Heart right ventricle (tissue), 16 donors: ENCODE measurements at regions of chr1 and their contacts with region 1.

Region 1: DNA sequence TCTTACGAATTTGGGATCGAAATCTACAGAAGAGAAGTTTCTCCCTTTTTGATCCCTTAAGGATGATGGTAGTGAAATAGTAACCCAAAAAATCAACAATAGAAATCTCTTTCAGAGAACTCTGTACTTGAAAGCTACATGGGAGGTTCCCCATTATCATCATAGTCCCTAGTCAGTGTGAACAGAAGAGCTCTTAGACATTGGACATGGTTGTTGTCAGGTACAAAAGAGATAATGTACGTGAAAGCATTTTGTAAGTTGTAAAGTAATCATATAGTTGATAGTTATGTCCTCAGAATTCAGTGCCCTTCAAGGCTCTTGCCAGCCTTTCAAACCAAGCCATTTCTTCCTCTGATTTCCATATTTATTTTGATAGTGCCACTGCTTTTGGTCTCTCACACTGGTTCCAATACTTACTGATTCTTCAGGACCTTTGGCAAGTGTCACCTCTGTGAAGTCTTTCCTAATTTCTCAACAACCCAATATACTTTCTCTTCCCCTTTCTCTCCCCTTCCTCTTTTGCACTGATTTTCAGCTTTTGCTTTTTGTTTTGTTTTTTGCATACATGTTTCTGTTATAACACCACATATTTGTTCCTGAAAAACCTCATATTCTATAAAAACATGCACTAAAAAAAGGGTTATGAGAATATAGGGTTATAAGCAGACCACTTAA is 22.4 kb downstream of the VPS45 start:
- DNase-seq: no peak
- ATAC-seq: no peak
- H3K4me3 ChIP-seq: no peak overlapping the region
- H3K27ac ChIP-seq: peak overlapping the region in 4 of 10 donors; percentile 12 to 46 (median 17)
- H3K4me1 ChIP-seq: peaks cover 0 to 30% (median 8%) of the 10 kb centered on the region in 9 donors
- H3K27me3 ChIP-seq: no peaks in the 10 kb centered on the region
- CTCF ChIP-seq: no peak

Region 2: GRCh38 chr1:150149271-150150132 is 59.5 kb after region 1 on chr1 and contains the start of gene PLEKHO1:
- intact Hi-C with region 1: loop called in 1 of 10 experiments (anchors 5 kb)
- DNase-seq: peak; percentile 85 to 90
- ATAC-seq: peak; percentile 70 to 89 (median 82)
- H3K4me3 ChIP-seq: peak within 1 kb of the TSS; percentile 67 to 94 (median 87)
- H3K27ac ChIP-seq: peak within 1 kb of the TSS; percentile 79 to 99 (median 93)
- H3K4me1 ChIP-seq: peaks cover 0 to 66% (median 51%) of the 10 kb centered on the region in 9 donors
- H3K27me3 ChIP-seq: no peaks in the 10 kb centered on the region
- CTCF ChIP-seq: no peak
- total RNA-seq, gene PLEKHO1: 29.3 to 82.3 (median 56.8) TPM

Region 3: DNA sequence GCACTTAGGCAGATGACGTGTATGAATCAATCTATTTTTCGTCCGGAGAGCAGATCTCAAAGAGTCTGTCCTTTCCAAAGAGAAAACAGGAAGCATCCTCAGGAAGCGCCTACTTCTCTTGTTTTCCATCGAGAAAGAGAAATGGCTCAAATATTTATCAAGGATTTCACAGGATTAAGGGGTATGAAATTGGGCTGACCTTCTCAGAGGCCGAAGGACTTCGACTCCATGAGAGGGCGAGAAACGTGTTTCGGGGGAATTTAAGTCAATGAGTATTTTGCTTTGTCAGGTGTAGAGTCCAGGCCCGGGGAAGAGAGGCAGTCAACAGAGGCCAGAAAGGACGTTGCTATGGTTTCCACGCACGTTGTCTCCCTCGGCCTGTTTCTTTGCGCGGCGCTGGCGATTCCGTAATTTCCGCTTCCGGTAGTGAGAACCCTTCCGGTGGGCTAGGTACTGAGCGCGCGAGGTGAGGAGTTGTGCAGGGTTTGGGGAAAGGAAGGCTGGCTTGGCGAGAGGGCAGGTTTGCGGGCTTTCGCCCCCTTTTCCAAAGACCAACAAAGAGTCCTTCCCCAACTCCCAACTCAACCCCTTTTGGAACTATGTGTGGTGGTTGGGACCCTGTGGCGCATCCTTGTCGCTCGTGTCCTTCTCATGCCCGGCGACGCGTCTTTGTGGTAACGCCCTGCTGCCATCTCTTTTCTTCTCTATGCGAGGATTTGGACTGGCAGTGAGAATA is 203.6 kb after region 1 on chr1 and contains the start of gene MRPS21:
- intact Hi-C with region 1: no loop called
- DNase-seq: peak; percentile 86 to 93
- ATAC-seq: peak; percentile 95 to 99 (median 98)
- H3K4me3 ChIP-seq: peak within 1 kb of the TSS; percentile 62 to 90 (median 76)
- H3K27ac ChIP-seq: peak within 1 kb of the TSS; percentile 4 to 92 (median 82)
- H3K4me1 ChIP-seq: peaks cover 5 to 26% (median 17%) of the 10 kb centered on the region in 9 donors
- H3K27me3 ChIP-seq: no peaks in the 10 kb centered on the region
- CTCF ChIP-seq: no peak
- total RNA-seq, gene MRPS21: 68.4 to 80.0 (median 73.6) TPM